Cardiac septum (tissue), 1 donor: ENCODE measurements at regions of chr1 and their contacts with region 1.

Region 1: GRCh38 chr1:185646202-185646683 is 87.9 kb upstream of the HMCN1 start:
- DNase-seq: no peak

Region 2: GRCh38 chr1:185585770-185586169 is 60.5 kb before region 1 on chr1:
- intact Hi-C with region 1: no loop called
- DNase-seq: no peak

Region 3: GRCh38 chr1:185595835-185596667 is 50.2 kb before region 1 on chr1:
- intact Hi-C with region 1: loop called (anchors 5 kb)
- DNase-seq: no peak

Region 4: GRCh38 chr1:186033744-186034345 is 387.6 kb after region 1 on chr1:
- intact Hi-C with region 1: no loop called
- DNase-seq: no peak

Region 5: GRCh38 chr1:186059312-186059711 is 413.1 kb after region 1 on chr1:
- intact Hi-C with region 1: no loop called
- DNase-seq: no peak